AG04450 (cell line): ENCODE measurements at regions of chr18 and their contacts with region 1.

Region 1: GRCh38 chr18:41004324-41004723 is 950.7 kb upstream of the PIK3C3 start:
- DNase-seq: no peak
- H3K4me3 ChIP-seq: no peak overlapping the region
- H3K27ac ChIP-seq: no peak overlapping the region
- H3K27me3 ChIP-seq: no peaks in the 10 kb centered on the region
- CTCF ChIP-seq: no peak

Region 2: DNA sequence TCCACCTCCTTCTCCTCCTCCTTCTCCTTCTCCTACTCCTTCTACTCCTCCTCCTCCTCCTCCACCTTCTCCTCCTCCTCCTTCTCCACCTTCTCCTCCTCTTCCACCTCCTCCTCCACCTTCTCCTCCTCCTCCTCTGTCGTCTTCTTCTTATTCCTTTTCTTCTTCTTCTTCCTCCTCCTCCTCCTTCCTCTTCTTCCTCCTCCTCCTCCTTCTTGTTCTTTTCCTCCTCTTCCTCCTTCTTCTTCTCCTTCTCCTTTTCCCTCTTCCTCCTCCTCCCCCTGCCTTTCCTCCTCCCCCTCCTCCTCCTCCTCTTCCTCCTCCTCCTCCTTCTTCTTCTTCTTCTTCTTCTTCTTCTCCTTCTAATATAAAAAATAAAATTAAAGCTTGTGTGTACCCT is 20.5 kb before region 1 on chr18:
- CTCF ChIA-PET with region 1: interaction called, 15 read pairs
- POLR2A ChIA-PET with region 1: no interaction called
- DNase-seq: no peak
- H3K4me3 ChIP-seq: no peak overlapping the region
- H3K27ac ChIP-seq: no peak overlapping the region
- H3K27me3 ChIP-seq: no peaks in the 10 kb centered on the region
- CTCF ChIP-seq: no peak